T-cell (primary cell): ENCODE measurements at regions of chr12 and their contacts with region 1.

Region 1: GRCh38 chr12:122500685-122501488 is at the start of gene ZCCHC8:
- DNase-seq: peak; percentile 87 to 98 (median 95)
- ATAC-seq: peak; percentile 93 to 97 (median 96)
- H3K4me3 ChIP-seq: peak within 1 kb of the TSS; percentile 68 to 76
- H3K4me3 Mint-ChIP-seq: peak within 1 kb of the TSS; percentile 96 to 97 (median 97)
- H3K27ac ChIP-seq: peak within 1 kb of the TSS; percentile 83
- H3K27ac Mint-ChIP-seq: peak within 1 kb of the TSS; percentile 89 to 98
- H3K4me1 ChIP-seq: peaks cover 15 to 32% of the 10 kb centered on the region in 2 experiments
- H3K4me1 Mint-ChIP-seq: peaks cover 41 to 42% (median 41%) of the 10 kb centered on the region in 3 donors
- H3K27me3 ChIP-seq: no peaks in the 10 kb centered on the region
- H3K27me3 Mint-ChIP-seq: no peaks in the 10 kb centered on the region
- total RNA-seq, gene ZCCHC8: 41.9 to 49.5 (median 45.3) TPM

Region 2: DNA sequence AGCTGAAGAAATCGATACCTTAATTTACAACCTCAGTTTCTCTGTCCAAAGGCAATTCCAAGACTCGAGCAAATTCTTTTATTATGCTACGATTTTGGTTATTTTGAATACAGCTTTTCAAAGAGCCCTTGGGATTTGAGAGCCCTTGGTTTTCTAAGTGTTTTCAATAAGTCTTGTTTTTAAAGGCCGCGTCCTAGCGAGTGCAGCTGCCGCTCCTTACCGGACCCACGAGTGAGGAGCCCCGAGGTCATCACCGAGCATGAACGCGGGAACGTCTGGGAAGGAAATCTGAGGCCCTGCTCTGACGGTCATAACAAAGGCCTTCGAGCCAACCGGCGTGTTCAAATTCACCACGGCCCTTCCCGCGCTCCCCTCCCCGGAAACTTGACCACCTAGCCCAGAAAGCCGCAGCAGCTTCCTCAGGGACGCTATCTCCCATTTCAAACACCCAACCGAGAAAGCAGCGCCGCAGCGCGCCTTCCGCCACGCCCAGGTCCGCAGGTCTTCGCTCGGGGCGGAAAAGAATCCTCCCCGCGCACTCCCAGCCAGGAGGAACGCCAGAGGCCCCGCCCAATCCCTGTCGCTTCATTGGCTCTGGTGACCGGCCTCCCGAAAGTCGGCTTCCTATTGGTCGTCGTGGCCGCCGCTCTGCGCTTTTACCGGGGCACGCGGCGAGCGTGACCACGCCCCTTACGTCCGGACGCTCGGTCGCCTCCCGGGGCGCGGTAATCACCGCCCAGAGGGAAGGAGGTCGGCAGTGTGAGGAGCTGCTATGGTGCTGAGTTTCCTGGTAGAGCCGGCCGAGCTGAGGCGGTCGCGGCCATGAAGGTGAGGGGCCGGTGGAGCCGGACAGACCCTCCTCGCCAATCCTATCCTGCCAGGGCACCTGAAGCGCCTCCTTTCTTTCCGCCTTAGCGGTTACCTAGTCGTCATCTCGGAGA is 1101.2 kb before region 1 on chr12 and contains the start of gene RNF34:
- CTCF ChIA-PET with region 1: no interaction called
- POLR2A ChIA-PET with region 1: interaction called in 1 of 2 experiments, 11 read pairs
- DNase-seq: peak; percentile 94 to 99 (median 98)
- ATAC-seq: peak; percentile 91 to 93 (median 92)
- H3K4me3 ChIP-seq: peak within 1 kb of the TSS; percentile 81
- H3K4me3 Mint-ChIP-seq: peak within 1 kb of the TSS; percentile 87 to 90 (median 89)
- H3K27ac ChIP-seq: peak within 1 kb of the TSS; percentile 82
- H3K27ac Mint-ChIP-seq: peak within 1 kb of the TSS; percentile 94 to 96
- H3K4me1 ChIP-seq: peaks cover 15 to 24% of the 10 kb centered on the region in 2 experiments
- H3K4me1 Mint-ChIP-seq: peaks cover 41 to 53% (median 49%) of the 10 kb centered on the region in 3 donors
- H3K27me3 ChIP-seq: no peaks in the 10 kb centered on the region
- H3K27me3 Mint-ChIP-seq: no peaks in the 10 kb centered on the region
- total RNA-seq, gene RNF34: 71.8 to 94.5 (median 80.8) TPM

Region 3: GRCh38 chr12:122399592-122400373 is 101.1 kb before region 1 on chr12:
- CTCF ChIA-PET with region 1: interaction called, 5 to 15 read pairs
- POLR2A ChIA-PET with region 1: interaction called in 1 of 2 experiments, 4 read pairs
- DNase-seq: peak in 33 of 35 experiments; percentile 10 to 79 (median 40)
- ATAC-seq: peak; percentile 82 to 87 (median 84)
- H3K4me3 ChIP-seq: no peak overlapping the region
- H3K4me3 Mint-ChIP-seq: peak overlapping the region; percentile 57 to 69 (median 67)
- H3K27ac ChIP-seq: peak overlapping the region; percentile 46
- H3K27ac Mint-ChIP-seq: peak overlapping the region; percentile 94
- H3K4me1 ChIP-seq: peaks cover 0 to 13% of the 10 kb centered on the region in 2 experiments
- H3K4me1 Mint-ChIP-seq: peaks cover 39 to 42% (median 40%) of the 10 kb centered on the region in 3 donors
- H3K27me3 ChIP-seq: no peaks in the 10 kb centered on the region
- H3K27me3 Mint-ChIP-seq: no peaks in the 10 kb centered on the region

Region 4: DNA sequence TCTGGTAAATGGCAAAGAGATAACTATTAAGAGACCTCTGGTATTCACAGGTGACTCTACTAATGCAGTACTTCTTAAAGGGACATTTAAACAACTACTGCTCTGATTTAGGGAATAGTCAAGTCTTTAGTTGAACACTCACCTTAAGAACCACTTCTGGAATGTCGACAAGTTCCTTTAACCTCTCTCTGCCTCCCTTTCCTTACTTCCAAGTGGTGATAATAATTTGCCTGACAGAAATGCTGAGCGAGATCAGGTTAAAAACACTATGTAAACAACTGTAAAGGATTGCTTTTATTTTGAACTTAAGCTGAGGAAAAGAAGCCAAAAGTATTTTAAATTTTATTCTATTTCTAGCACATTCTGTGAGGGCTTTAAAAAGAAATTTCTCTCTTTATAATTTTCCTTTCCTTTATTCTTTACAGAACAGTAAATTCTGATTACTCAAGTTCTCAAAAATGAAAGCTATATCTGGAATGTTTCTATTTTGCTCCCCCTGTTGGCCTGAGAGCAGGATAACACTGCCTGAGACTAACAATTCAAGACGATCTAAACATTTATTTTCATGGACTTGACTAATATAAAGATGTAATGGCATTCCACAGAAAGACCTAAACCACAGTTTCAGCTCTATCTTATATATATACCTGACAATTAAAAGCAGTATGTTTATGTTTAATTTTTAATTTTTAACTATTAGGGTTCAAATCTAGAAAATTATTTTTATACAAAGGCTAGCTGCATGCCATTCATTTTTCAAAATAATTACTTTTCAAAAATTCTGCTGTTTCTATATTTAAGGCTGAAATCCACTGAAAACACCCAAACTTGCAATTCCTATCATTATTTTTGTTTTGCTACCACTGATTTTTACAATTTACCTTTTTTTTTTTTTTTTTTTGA is 29.3 kb before region 1 on chr12:
- CTCF ChIA-PET with region 1: interaction called in 1 of 2 experiments, 5 read pairs
- POLR2A ChIA-PET with region 1: interaction called, 3 to 10 read pairs
- DNase-seq: peak in 10 of 35 experiments; percentile 7 to 80 (median 20)
- ATAC-seq: peak; percentile 54 to 80 (median 72)
- H3K4me3 ChIP-seq: no peak overlapping the region
- H3K4me3 Mint-ChIP-seq: no peak overlapping the region
- H3K27ac ChIP-seq: peak overlapping the region; percentile 16
- H3K27ac Mint-ChIP-seq: peak overlapping the region; percentile 12 to 49
- H3K4me1 ChIP-seq: peaks cover 0 to 5% of the 10 kb centered on the region in 2 experiments
- H3K4me1 Mint-ChIP-seq: peaks cover 7 to 9% (median 8%) of the 10 kb centered on the region in 3 donors
- H3K27me3 ChIP-seq: no peaks in the 10 kb centered on the region
- H3K27me3 Mint-ChIP-seq: no peaks in the 10 kb centered on the region

Region 5: DNA sequence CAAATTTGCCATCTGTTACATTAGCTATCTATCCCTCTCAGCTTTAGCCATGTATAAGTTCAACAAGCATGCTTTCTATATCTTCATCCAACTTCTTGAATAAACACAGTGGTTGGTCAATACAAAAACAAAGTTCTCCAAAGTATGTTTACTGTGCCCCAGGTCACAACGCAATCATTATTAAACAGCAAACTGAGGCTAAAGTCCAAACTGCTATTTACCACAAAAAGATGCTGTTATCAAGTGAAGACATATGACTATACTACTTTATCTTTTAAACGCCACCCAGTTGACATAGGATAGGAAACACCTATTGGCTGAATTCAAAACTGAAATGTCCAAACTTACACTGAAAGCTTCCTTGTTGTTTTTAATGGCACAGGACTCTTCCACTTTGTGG is 11.8 kb before region 1 on chr12:
- CTCF ChIA-PET with region 1: interaction called, 3 read pairs
- POLR2A ChIA-PET with region 1: interaction called in 1 of 2 experiments, 10 read pairs
- DNase-seq: no peak
- ATAC-seq: no peak
- H3K4me3 ChIP-seq: no peak overlapping the region
- H3K4me3 Mint-ChIP-seq: no peak overlapping the region
- H3K27ac ChIP-seq: no peak overlapping the region
- H3K27ac Mint-ChIP-seq: no peak overlapping the region
- H3K4me1 ChIP-seq: no peaks in the 10 kb centered on the region
- H3K4me1 Mint-ChIP-seq: peaks cover 8 to 13% (median 8%) of the 10 kb centered on the region in 3 donors
- H3K27me3 ChIP-seq: no peaks in the 10 kb centered on the region
- H3K27me3 Mint-ChIP-seq: no peaks in the 10 kb centered on the region

Region 6: DNA sequence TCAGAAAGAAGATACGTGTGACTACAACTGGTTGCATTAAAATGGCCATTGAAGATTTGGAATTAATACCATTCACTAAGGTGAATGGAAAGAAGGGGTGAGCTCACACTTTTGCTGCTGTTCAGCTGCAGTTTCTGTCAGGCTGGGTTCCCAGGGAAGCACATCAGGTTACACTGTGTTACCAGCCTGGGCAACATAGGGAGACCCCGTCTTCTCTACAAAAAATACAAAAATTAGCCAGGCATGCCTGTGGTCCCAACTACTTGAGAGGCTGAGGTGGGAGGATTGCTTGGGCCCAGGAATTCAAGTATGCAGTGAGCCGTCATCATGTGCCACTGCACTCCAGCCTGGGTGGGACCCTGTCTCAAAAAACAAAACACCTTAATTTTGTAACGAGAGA is 12.8 kb after region 1 on chr12:
- CTCF ChIA-PET with region 1: no interaction called
- POLR2A ChIA-PET with region 1: interaction called, 4 to 23 read pairs
- DNase-seq: no peak
- ATAC-seq: peak in 1 of 4 experiments; percentile 17
- H3K4me3 ChIP-seq: no peak overlapping the region
- H3K4me3 Mint-ChIP-seq: no peak overlapping the region
- H3K27ac ChIP-seq: no peak overlapping the region
- H3K27ac Mint-ChIP-seq: no peak overlapping the region
- H3K4me1 ChIP-seq: peaks cover 0 to 4% of the 10 kb centered on the region in 2 experiments
- H3K4me1 Mint-ChIP-seq: peaks cover 9 to 20% (median 15%) of the 10 kb centered on the region in 3 donors
- H3K27me3 ChIP-seq: no peaks in the 10 kb centered on the region
- H3K27me3 Mint-ChIP-seq: no peaks in the 10 kb centered on the region

Region 7: GRCh38 chr12:122526683-122527477 is 26.0 kb after region 1 on chr12 and contains the starts of genes KNTC1 and RSRC2:
- CTCF ChIA-PET with region 1: interaction called in 1 of 2 experiments, 12 read pairs
- POLR2A ChIA-PET with region 1: interaction called, 12 to 34 read pairs
- DNase-seq: peak; percentile 92 to 100 (median 98)
- ATAC-seq: peak; percentile 90 to 96 (median 92)
- H3K4me3 ChIP-seq: peak within 1 kb of the TSS; percentile 88 to 95
- H3K4me3 Mint-ChIP-seq: no peak within 1 kb of the TSS
- H3K27ac ChIP-seq: peak within 1 kb of the TSS; percentile 99
- H3K27ac Mint-ChIP-seq: no peak within 1 kb of the TSS
- H3K4me1 ChIP-seq: peaks cover 17 to 34% of the 10 kb centered on the region in 2 experiments
- H3K4me1 Mint-ChIP-seq: peaks cover 32 to 33% (median 33%) of the 10 kb centered on the region in 3 donors
- H3K27me3 ChIP-seq: no peaks in the 10 kb centered on the region
- H3K27me3 Mint-ChIP-seq: no peaks in the 10 kb centered on the region
- total RNA-seq, gene KNTC1: 26.2 to 35.7 (median 29.2) TPM
- total RNA-seq, gene RSRC2: 92.8 to 237 (median 108) TPM